ENCODE measurements at regions of chr19 and their contacts with region 1.

Region 1: DNA sequence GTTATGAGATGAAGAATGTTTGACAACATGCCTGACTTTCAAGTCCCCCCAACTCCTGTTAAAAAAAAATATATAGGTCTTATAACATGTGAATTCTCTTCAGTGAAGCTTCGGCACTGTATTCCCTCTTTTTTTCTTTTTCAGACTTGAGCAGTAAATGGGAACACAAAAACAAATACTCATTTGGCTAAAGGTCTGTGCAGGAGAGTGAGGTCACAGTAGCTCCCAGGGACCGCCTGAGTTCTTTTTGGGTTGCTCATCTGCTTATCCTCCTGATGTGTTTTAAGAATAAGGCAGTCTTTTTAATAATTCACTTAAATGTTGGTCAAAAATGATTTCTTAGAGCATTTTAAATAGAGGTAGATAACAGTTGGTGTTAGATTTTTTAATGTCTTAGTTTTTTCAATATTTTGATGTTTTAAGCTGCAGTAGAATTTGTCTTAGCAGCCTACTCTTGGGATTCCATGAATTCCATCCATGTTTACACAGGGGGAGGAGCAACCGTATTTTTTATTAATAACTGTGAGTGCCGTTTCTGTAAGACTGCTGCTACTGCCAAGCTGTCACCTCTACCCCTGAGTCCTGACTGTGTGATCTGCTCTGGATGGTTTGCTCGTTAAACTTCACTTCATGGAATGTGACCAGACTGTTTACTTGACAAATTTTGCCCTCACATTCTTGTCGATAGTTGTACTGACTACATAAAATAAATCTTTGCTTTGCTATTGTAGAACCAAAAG is 14.9 kb downstream of the HNRNPM start:
- DNase-seq: no peak

Region 2: DNA sequence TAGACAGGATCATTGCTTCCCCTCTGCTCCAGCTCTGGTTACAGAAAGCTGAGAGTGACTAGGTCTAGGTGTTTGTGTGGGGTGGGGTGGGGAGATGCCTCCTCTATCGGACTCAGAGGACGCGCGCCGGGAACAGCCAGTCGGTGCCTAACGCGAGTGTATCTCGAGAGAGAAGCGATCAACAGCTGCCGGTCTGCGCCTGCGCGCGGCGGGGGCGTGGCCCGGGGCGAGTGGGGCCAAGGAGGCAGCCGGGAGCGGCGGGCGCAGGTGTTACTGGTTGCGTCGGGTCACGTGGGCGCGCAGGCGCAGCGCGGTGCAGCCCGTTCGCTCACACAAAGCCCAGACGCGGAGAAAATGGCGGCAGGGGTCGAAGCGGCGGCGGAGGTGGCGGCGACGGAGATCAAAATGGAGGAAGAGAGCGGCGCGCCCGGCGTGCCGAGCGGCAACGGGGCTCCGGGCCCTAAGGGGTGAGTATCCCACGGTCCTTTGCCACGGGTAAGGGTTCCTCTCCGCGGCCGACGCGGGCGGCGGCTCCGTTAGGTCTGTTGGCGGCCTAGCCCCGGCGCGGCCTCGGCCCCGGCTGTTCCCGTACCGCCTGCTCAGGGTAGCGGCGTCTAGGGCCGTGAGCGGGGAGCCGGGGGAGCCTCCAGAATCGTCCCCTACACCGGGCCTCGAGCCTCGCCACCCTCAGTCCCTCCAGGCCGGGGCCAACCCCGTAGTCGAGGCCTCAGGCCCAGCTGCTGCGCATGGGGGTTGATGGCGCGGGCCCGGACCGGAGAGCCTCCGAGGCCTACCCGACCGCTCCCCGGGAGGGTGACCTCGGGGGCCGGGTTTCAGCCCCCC is 14.8 kb before region 1 on chr19 and contains the start of gene HNRNPM:
- intact Hi-C with region 1: loop called (anchors 2 kb)
- DNase-seq: peak; percentile 100
- total RNA-seq, gene HNRNPM: 102 TPM

Region 3: DNA sequence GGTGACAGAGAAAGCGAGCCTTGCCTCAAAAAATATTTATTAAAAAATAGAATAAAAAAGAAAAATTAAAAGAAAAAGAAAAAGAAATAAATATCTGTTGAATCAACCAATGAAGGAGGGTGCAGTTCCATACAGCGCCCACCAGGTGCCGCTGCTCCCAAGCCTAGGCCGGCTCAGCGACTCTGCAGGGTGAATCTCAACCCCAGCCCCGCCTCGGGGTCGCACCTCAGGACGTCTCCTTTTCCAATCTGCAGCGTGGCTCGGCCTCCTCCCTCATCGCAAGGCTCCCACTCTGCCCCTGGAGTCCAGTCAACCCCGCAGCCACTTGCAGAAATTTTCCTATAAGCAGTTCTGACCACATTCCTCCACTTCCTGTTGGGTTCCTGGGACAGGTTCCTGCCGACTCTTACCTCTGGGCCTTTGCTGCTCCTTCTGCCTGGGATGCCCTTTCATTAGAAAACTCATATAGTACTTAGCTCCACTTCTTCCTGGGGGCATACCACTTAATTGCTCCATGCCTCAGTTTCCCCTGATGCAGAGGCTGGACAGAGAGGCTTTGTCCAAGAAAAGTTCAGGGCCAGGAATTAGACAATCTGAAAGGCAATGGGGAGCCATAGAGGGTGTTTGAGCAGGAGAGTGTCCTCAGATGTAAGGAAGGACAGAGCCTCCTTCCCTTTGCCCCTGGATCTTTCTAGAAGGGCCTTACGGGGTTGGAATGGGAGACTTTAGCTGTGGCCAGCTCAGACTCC is 195.1 kb after region 1 on chr19:
- intact Hi-C with region 1: no loop called
- DNase-seq: peak; percentile 83

Measured in cardiac septum (tissue), 1 donor.